ENCODE measurements at regions of chr20 and their contacts with region 1.

Region 1: DNA sequence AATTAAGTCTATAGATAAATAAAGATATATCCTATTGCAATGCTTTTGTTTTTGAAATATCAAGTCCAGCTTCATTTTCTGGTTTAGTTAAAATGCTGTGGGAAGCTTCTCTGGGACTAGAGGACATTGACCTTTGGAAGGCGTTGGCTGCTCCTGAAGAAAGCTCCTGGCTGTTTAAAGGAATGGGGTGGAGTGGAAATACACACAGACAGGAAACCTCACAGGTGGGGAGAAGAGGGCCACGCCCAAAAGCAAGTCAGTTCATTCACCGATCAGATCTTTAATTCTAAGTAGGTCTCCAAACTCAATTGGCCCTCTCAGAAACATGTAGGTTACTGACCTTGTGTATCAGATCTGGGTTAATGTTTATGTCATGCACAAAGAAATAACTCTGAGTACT is 59.6 kb downstream of the SPTLC3 start:
- DNase-seq: peak; percentile 14 to 41
- H3K4me3 ChIP-seq: no peak overlapping the region
- H3K4me3 Mint-ChIP-seq: no peak overlapping the region
- H3K27ac Mint-ChIP-seq: no peak overlapping the region
- H3K4me1 ChIP-seq: peaks cover 9% of the 10 kb centered on the region
- H3K4me1 Mint-ChIP-seq: peaks cover 7% of the 10 kb centered on the region
- H3K27me3 ChIP-seq: no peaks in the 10 kb centered on the region
- H3K27me3 Mint-ChIP-seq: no peaks in the 10 kb centered on the region
- CTCF ChIP-seq: no peak

Region 2: DNA sequence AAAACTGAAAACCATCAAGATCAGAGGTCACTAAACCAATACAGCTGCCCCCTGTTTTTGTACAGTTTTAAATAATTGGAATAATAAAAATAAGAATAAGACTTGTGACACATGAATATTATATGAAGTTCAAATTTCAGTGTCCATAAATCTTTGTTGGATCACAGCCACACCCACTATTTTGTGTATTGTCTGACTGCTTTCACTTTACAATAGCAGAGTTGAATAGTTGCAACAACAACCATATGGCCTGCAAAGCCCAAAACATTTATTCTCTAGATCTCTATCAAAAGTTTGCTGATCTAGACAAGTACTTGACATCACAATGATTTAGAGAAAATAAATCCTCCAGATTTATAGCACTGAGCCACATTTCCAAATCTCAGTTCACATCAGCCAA is 14.0 kb after region 1 on chr20:
- CTCF ChIA-PET with region 1: no interaction called
- POLR2A ChIA-PET with region 1: no interaction called
- intact Hi-C with region 1: no loop called
- DNase-seq: no peak
- H3K4me3 ChIP-seq: no peak overlapping the region
- H3K4me3 Mint-ChIP-seq: no peak overlapping the region
- H3K27ac Mint-ChIP-seq: no peak overlapping the region
- H3K4me1 ChIP-seq: no peaks in the 10 kb centered on the region
- H3K4me1 Mint-ChIP-seq: no peaks in the 10 kb centered on the region
- H3K27me3 ChIP-seq: no peaks in the 10 kb centered on the region
- H3K27me3 Mint-ChIP-seq: no peaks in the 10 kb centered on the region
- CTCF ChIP-seq: no peak

Region 3: DNA sequence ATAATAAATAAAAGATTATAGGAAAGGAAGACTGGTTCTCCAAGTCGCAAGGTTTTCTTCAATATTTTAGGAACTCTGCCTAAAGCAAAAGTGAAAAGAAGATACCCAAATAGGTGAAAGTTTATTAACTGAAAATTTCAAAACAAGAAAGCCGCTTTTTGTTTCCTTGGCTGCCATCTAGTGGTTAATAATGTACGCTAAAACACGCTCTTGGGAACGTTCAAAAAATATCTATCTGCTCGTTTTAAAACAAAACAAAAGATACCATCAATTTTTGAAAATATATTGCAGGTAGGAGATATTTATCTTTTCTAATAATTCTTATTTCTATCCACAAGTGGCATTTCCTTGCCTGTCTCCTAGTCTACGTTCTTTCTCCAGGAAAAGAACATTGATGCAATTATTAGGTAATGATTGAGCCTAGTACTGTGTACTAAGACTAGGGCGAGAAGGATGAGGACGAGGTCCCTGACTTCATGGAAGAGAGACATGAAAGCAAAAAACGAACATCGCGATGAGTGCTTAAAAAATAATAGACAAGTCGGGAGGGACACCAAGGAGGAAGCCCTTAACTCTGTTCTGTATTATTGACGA is 37.6 kb after region 1 on chr20:
- CTCF ChIA-PET with region 1: interaction called, 6 read pairs
- POLR2A ChIA-PET with region 1: no interaction called
- intact Hi-C with region 1: loop called (anchors 5 kb)
- DNase-seq: peak in 1 of 2 experiments; percentile 37
- H3K4me3 ChIP-seq: no peak overlapping the region
- H3K4me3 Mint-ChIP-seq: no peak overlapping the region
- H3K27ac Mint-ChIP-seq: no peak overlapping the region
- H3K4me1 ChIP-seq: peaks cover 46% of the 10 kb centered on the region
- H3K4me1 Mint-ChIP-seq: peaks cover 23% of the 10 kb centered on the region
- H3K27me3 ChIP-seq: no peaks in the 10 kb centered on the region
- H3K27me3 Mint-ChIP-seq: no peaks in the 10 kb centered on the region
- CTCF ChIP-seq: peak; percentile 70 to 71

Region 4: DNA sequence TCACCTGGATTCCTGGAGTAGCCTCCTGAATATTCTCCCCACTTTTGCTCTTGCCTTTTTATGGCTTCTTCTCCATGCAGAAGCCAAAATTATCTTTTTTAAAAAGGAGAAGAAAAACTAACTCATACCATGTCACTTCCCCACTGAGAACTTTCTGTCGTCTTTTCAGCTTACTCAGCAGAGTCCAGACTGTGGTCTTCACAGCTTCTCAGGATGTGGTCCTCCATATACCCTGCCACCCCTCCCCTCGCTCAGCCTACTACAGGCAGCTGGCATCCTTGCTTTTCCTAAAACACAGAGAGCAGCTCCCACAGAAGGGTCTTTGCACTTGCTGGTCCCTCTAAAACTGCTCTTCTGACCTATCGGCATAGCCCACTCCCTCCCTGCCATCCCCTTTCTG is 63.3 kb after region 1 on chr20:
- CTCF ChIA-PET with region 1: no interaction called
- POLR2A ChIA-PET with region 1: no interaction called
- intact Hi-C with region 1: no loop called
- DNase-seq: no peak
- H3K4me3 ChIP-seq: no peak overlapping the region
- H3K4me3 Mint-ChIP-seq: no peak overlapping the region
- H3K27ac Mint-ChIP-seq: no peak overlapping the region
- H3K4me1 ChIP-seq: no peaks in the 10 kb centered on the region
- H3K4me1 Mint-ChIP-seq: no peaks in the 10 kb centered on the region
- H3K27me3 ChIP-seq: no peaks in the 10 kb centered on the region
- H3K27me3 Mint-ChIP-seq: no peaks in the 10 kb centered on the region
- CTCF ChIP-seq: no peak